Prostate gland (tissue), 2 donors: ENCODE measurements at regions of chr10 and their contacts with region 1.

Region 1: DNA sequence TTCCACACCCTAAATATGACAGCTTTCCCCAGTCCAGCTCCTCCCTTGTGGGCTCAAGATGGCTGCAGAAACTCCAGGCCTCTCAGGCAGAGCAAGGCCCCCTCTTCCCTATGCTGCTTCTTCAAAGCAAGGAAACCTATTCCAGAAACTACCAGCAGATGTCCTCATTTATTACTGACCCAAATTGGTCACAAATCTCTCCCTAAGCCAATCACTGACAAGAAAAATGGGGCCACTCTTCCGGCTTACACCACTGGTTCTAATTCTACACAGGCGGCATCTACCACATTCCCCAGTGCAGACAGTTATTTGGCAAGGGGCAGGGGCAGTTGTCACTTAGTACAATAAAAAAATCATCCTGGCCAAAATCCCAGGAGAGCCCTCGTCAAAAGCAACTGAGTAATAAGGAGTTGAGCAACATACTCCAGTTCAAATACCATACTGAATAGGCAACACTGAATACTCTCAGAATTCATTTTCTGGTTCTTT is 150.4 kb downstream of the SFMBT2 start:
- DNase-seq: peak; percentile 90
- H3K4me3 ChIP-seq: no peak overlapping the region
- H3K27ac ChIP-seq: peak overlapping the region; percentile 40 to 56
- H3K4me1 ChIP-seq: peaks cover 6% of the 10 kb centered on the region
- H3K27me3 ChIP-seq: no peaks in the 10 kb centered on the region
- CTCF ChIP-seq: peak; percentile 40 to 81 (median 73)
- POLR2A ChIP-seq: no peak

Region 2: GRCh38 chr10:6786579-6787031 is 473.9 kb before region 1 on chr10:
- intact Hi-C with region 1: loop called (anchors 10 kb)
- DNase-seq: no peak
- H3K4me3 ChIP-seq: no peak overlapping the region
- H3K27ac ChIP-seq: no peak overlapping the region
- H3K4me1 ChIP-seq: no peaks in the 10 kb centered on the region
- H3K27me3 ChIP-seq: no peaks in the 10 kb centered on the region
- CTCF ChIP-seq: peak in 2 of 4 experiments; percentile 23 to 50
- POLR2A ChIP-seq: no peak

Region 3: GRCh38 chr10:6920072-6921019 is 340.1 kb before region 1 on chr10:
- intact Hi-C with region 1: loop called (anchors 5 kb)
- DNase-seq: peak; percentile 67
- H3K4me3 ChIP-seq: peak overlapping the region in 1 of 2 donors; percentile 7
- H3K27ac ChIP-seq: no peak overlapping the region
- H3K4me1 ChIP-seq: no peaks in the 10 kb centered on the region
- H3K27me3 ChIP-seq: no peaks in the 10 kb centered on the region
- CTCF ChIP-seq: peak in 3 of 4 experiments; percentile 51 to 68 (median 61)
- POLR2A ChIP-seq: no peak

Region 4: DNA sequence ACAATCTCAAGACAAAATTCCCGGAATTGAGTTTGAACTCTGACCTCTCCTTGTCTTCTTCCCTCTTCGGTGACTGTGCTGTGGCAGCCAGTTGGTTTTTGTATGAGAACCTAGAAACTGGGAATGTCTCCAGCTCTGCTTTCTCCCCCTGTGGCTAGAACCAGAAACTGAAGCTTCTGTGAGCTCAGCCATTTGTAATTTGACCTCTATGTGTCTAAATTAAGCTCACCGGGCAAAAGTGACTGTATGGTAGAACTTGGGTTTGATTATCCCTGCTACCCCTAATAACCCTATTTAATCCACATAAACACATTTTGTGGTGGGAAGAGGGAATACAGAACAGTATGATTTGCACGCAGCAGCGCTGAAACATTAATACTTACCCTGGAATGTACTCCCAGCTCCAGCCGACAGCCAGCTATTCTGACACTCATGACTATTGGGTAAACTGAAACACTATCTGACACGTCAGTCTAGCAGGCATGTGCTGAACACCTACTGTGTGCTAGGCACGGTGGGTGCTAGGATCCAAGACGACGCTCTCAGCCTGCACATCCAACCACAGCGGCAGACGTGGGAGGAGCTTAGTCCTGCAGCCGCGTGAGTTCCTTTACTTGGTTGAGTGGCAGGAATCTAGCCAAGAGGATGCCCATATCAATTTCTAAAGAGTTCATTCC is 174.4 kb before region 1 on chr10:
- intact Hi-C with region 1: loop called (anchors 10 kb)
- DNase-seq: no peak
- H3K4me3 ChIP-seq: no peak overlapping the region
- H3K27ac ChIP-seq: no peak overlapping the region
- H3K4me1 ChIP-seq: no peaks in the 10 kb centered on the region
- H3K27me3 ChIP-seq: no peaks in the 10 kb centered on the region
- CTCF ChIP-seq: peak in 1 of 4 experiments; percentile 9
- POLR2A ChIP-seq: no peak

Region 5: GRCh38 chr10:7153750-7154149 is 106.7 kb before region 1 on chr10:
- intact Hi-C with region 1: no loop called
- DNase-seq: no peak
- H3K4me3 ChIP-seq: no peak overlapping the region
- H3K27ac ChIP-seq: no peak overlapping the region
- H3K4me1 ChIP-seq: no peaks in the 10 kb centered on the region
- H3K27me3 ChIP-seq: no peaks in the 10 kb centered on the region
- CTCF ChIP-seq: no peak
- POLR2A ChIP-seq: no peak

Region 6: GRCh38 chr10:7301006-7301793 is 40.7 kb after region 1 on chr10:
- intact Hi-C with region 1: loop called (anchors 5 kb)
- DNase-seq: no peak
- H3K4me3 ChIP-seq: no peak overlapping the region
- H3K27ac ChIP-seq: no peak overlapping the region
- H3K4me1 ChIP-seq: no peaks in the 10 kb centered on the region
- H3K27me3 ChIP-seq: no peaks in the 10 kb centered on the region
- CTCF ChIP-seq: no peak
- POLR2A ChIP-seq: no peak